PC-3 (cell line): ENCODE measurements at regions of chr1 and their contacts with region 1.

Region 1: GRCh38 chr1:242017584-242018233 is 18.8 kb upstream of the MAP1LC3C start:
- DNase-seq: peak; percentile 84
- ATAC-seq: peak; percentile 42
- H3K4me3 ChIP-seq: no peak overlapping the region
- H3K27ac ChIP-seq: no peak overlapping the region
- H3K4me1 ChIP-seq: no peaks in the 10 kb centered on the region
- H3K27me3 ChIP-seq: no peaks in the 10 kb centered on the region
- CTCF ChIP-seq: peak; percentile 75

Region 2: DNA sequence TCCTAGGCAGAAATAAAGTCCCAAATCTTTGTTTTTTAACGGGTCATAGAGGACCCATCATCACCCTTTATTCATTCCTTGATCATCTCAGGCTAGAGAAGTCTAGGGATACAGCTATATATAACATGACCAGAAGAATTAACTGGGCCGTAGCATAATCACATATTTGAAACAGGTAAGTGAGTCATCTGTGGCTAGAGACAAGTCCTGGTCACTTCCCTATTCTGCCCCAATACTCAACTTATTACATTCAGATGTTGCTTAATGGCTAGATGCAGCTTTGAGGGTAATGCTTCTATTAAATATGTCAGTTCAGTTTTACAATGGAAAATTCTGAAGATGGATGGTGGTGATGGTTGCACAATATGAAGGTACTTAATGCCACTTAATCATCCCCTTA is 122.7 kb before region 1 on chr1:
- CTCF ChIA-PET with region 1: no interaction called
- POLR2A ChIA-PET with region 1: no interaction called
- intact Hi-C with region 1: loop called (anchors 1 kb)
- DNase-seq: peak; percentile 71
- ATAC-seq: peak; percentile 86
- H3K4me3 ChIP-seq: no peak overlapping the region
- H3K27ac ChIP-seq: no peak overlapping the region
- H3K4me1 ChIP-seq: peaks cover 14% of the 10 kb centered on the region
- H3K27me3 ChIP-seq: no peaks in the 10 kb centered on the region
- CTCF ChIP-seq: no peak

Region 3: GRCh38 chr1:242225776-242226573 is 208.3 kb after region 1 on chr1:
- CTCF ChIA-PET with region 1: no interaction called
- POLR2A ChIA-PET with region 1: no interaction called
- intact Hi-C with region 1: loop called (anchors 5 kb)
- DNase-seq: peak; percentile 100
- ATAC-seq: peak; percentile 91
- H3K4me3 ChIP-seq: peak overlapping the region; percentile 36
- H3K27ac ChIP-seq: peak overlapping the region; percentile 95
- H3K4me1 ChIP-seq: peaks cover 48% of the 10 kb centered on the region
- H3K27me3 ChIP-seq: no peaks in the 10 kb centered on the region
- CTCF ChIP-seq: no peak

Region 4: GRCh38 chr1:242454262-242455045 is 436.7 kb after region 1 on chr1:
- CTCF ChIA-PET with region 1: no interaction called
- POLR2A ChIA-PET with region 1: no interaction called
- intact Hi-C with region 1: loop called (anchors 1 kb)
- DNase-seq: peak; percentile 72
- ATAC-seq: peak; percentile 88
- H3K4me3 ChIP-seq: 0 out of 2 replicates have a peak overlapping the region, but pooled peaks have one; percentile 2
- H3K27ac ChIP-seq: no peak overlapping the region
- H3K4me1 ChIP-seq: no peaks in the 10 kb centered on the region
- H3K27me3 ChIP-seq: peaks cover 65% of the 10 kb centered on the region
- CTCF ChIP-seq: peak; percentile 97

Region 5: GRCh38 chr1:243325305-243325890 is 1307.7 kb after region 1 on chr1:
- CTCF ChIA-PET with region 1: no interaction called
- POLR2A ChIA-PET with region 1: no interaction called
- intact Hi-C with region 1: loop called (anchors 1 kb)
- DNase-seq: peak; percentile 93
- ATAC-seq: peak; percentile 76
- H3K4me3 ChIP-seq: no peak overlapping the region
- H3K27ac ChIP-seq: no peak overlapping the region
- H3K4me1 ChIP-seq: no peaks in the 10 kb centered on the region
- H3K27me3 ChIP-seq: no peaks in the 10 kb centered on the region
- CTCF ChIP-seq: peak; percentile 99